Activated CD4-positive, alpha-beta T cell treated with anti-CD3 and anti-CD28 coated beads, Interleukin-2, amount 10 ng/mL, durations not matched to agents 24 days and 14 days (primary cell): ENCODE measurements at regions of chr5 and their contacts with region 1.

Region 1: DNA sequence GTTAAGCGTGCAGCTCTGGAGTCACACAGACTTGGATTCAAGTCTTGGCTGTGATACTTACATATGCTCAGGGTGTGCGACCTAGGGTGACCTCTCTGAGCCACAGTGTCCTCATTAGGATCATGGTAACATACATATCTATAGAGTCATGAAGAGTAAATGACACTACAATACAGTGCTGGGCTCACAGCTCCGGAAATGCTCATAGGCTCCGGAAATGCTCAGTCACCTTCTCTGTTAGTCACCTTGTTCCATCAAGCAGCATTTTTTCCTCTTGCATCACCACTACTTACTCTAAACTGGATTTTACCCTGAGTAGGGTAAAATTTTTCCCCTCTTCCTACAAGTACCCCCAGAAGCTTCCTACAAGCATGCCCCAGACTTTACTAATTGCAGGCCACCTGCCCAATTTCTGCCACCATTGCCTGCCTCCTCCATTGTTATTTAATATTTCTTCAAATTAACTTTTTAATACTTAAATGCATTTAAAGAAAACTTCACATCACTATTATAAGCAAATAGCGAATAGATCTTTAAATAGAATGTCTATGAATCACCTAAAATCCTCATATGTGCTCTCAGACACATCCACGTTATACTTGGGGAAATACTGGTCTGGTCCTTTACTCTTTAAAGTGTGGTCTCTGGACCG is 147.6 kb upstream of the SPRY4 start:
- DNase-seq: peak; percentile 72
- H3K4me3 Mint-ChIP-seq: peak overlapping the region; percentile 4
- H3K27ac Mint-ChIP-seq: peak overlapping the region; percentile 70
- H3K4me1 Mint-ChIP-seq: peaks cover 13% of the 10 kb centered on the region
- H3K27me3 Mint-ChIP-seq: no peaks in the 10 kb centered on the region

Region 2: GRCh38 chr5:142073362-142073988 is 399.0 kb before region 1 on chr5:
- intact Hi-C with region 1: no loop called
- DNase-seq: no peak
- H3K4me3 Mint-ChIP-seq: no peak overlapping the region
- H3K27ac Mint-ChIP-seq: peak overlapping the region; percentile 89
- H3K4me1 Mint-ChIP-seq: peaks cover 31% of the 10 kb centered on the region
- H3K27me3 Mint-ChIP-seq: no peaks in the 10 kb centered on the region

Region 3: DNA sequence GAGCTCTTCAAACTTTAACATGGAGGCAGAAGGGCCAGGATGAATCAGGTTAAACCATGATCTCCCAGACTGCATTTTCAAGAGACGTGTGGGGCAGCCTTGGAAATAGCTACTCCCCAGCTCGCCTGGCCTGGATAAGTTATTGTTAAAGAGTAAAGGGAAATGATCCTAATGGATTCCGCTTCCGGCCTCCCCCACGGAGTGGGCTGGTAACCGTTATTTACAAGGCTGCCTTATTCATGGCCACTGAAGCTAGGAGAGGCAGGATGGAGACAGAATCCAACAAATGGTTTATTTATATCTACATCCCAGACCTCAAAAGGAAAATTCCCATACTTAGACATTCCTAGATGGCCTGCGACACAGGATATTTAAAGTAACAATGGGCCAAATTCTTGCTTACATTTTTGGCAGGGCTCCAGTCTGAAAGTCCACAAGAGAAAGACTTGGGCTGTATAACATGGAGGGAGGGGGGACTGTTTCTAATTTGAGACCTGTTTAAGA is 175.5 kb before region 1 on chr5:
- intact Hi-C with region 1: no loop called
- DNase-seq: no peak
- H3K4me3 Mint-ChIP-seq: no peak overlapping the region
- H3K27ac Mint-ChIP-seq: no peak overlapping the region
- H3K4me1 Mint-ChIP-seq: peaks cover 8% of the 10 kb centered on the region
- H3K27me3 Mint-ChIP-seq: peaks cover 5% of the 10 kb centered on the region

Region 4: DNA sequence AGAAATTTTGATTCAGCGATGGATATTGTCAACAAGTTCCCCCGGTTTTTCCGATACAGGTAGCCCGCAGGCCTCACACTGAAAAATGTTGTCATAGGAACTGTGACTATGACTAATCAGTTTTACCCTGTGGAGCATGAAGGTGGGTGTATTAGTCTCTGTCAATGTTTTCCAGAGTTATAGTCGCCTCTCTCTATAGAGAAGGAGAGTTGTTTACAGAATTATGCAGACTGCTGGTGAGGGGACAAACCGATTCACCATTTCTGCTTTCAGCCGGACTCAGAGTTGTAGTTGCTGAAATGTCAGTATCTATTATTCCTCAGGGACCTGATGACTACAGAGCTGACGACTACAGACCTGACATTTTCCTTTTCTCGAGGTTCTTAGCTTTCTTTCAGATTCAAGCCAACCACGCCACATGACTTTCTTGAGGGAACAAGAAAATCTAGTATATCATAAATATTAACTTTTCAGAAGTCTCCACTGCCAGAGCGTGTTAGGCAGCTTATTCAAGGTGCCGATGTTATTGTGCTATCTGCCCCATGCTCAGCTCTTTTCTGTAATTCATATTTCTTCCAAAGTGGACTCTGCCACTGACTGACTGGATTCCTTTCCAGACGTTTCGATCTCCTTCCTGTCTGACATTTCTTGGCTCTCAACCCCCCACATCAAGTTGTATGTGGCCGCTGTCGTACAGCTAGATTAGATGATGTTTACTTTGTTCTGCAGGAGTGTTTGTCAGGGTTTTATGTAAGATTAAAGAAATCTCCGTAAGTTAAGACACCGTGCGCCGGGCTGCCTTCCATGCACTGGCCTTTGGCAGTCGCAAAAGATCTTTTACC is 35.3 kb after region 1 on chr5:
- intact Hi-C with region 1: loop called (anchors 1 kb)
- DNase-seq: no peak
- H3K4me3 Mint-ChIP-seq: peak overlapping the region; percentile 17
- H3K27ac Mint-ChIP-seq: peak overlapping the region; percentile 75
- H3K4me1 Mint-ChIP-seq: peaks cover 34% of the 10 kb centered on the region
- H3K27me3 Mint-ChIP-seq: no peaks in the 10 kb centered on the region